CD8-positive, alpha-beta T cell (primary cell): ENCODE measurements at regions of chr1 and their contacts with region 1.

Region 1: GRCh38 chr1:88998716-88999115 is 6.3 kb upstream of the KYAT3 start:
- DNase-seq: peak in 3 of 9 experiments; percentile 38 to 84 (median 78)
- ATAC-seq: peak; percentile 89
- H3K4me3 ChIP-seq: no peak overlapping the region
- H3K4me3 Mint-ChIP-seq: no peak overlapping the region
- H3K27ac ChIP-seq: no peak overlapping the region
- H3K27ac Mint-ChIP-seq: no peak overlapping the region
- H3K4me1 ChIP-seq: peaks cover 23% of the 10 kb centered on the region
- H3K4me1 Mint-ChIP-seq: peaks cover 36% of the 10 kb centered on the region
- H3K27me3 ChIP-seq: no peaks in the 10 kb centered on the region
- H3K27me3 Mint-ChIP-seq: no peaks in the 10 kb centered on the region
- CTCF ChIP-seq: peak; percentile 60

Region 2: GRCh38 chr1:89022167-89022959 is 23.6 kb after region 1 on chr1 and contains the start of gene GBP3:
- CTCF ChIA-PET with region 1: interaction called, 7 read pairs
- POLR2A ChIA-PET with region 1: interaction called, 4 read pairs
- intact Hi-C with region 1: loop called in 1 of 2 experiments (anchors 2 kb)
- DNase-seq: peak in 3 of 9 experiments; percentile 14 to 73 (median 54)
- ATAC-seq: peak; percentile 83
- H3K4me3 ChIP-seq: peak within 1 kb of the TSS; percentile 52 to 59
- H3K4me3 Mint-ChIP-seq: peak within 1 kb of the TSS; percentile 89
- H3K27ac ChIP-seq: peak within 1 kb of the TSS; percentile 50 to 87
- H3K27ac Mint-ChIP-seq: peak within 1 kb of the TSS; percentile 94
- H3K4me1 ChIP-seq: peaks cover 23% of the 10 kb centered on the region
- H3K4me1 Mint-ChIP-seq: peaks cover 47% of the 10 kb centered on the region
- H3K27me3 ChIP-seq: no peaks in the 10 kb centered on the region
- H3K27me3 Mint-ChIP-seq: no peaks in the 10 kb centered on the region
- CTCF ChIP-seq: no peak
- total RNA-seq, gene GBP3: 18.6 to 21.6 TPM

Region 3: DNA sequence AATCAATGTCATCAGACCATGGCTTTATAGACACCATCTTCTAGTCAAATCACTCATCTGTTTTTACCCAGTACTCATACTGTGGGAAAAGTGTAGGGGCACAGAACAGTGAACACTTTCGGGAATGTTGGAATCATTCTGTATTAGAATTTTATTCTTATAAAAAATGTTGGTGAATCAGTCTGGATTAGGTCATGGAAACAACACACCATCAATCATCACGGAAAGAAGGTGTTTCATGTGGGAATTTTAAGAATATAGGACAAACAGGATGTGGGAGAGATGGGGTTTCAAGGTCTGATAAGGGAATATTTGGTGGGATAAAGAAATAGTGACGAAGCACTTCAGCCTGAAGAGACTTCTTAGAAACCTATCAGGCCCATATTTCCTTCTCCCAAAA is 49.0 kb after region 1 on chr1:
- CTCF ChIA-PET with region 1: no interaction called
- POLR2A ChIA-PET with region 1: no interaction called
- intact Hi-C with region 1: no loop called
- DNase-seq: no peak
- ATAC-seq: no peak
- H3K4me3 ChIP-seq: no peak overlapping the region
- H3K4me3 Mint-ChIP-seq: no peak overlapping the region
- H3K27ac ChIP-seq: no peak overlapping the region
- H3K27ac Mint-ChIP-seq: no peak overlapping the region
- H3K4me1 ChIP-seq: no peaks in the 10 kb centered on the region
- H3K4me1 Mint-ChIP-seq: no peaks in the 10 kb centered on the region
- H3K27me3 ChIP-seq: no peaks in the 10 kb centered on the region
- H3K27me3 Mint-ChIP-seq: no peaks in the 10 kb centered on the region
- CTCF ChIP-seq: no peak

Region 4: GRCh38 chr1:89085781-89086180 is 87.1 kb after region 1 on chr1:
- CTCF ChIA-PET with region 1: interaction called, 20 read pairs
- POLR2A ChIA-PET with region 1: no interaction called
- intact Hi-C with region 1: loop called in 1 of 2 experiments (anchors 5 kb)
- DNase-seq: peak in 4 of 9 experiments; percentile 33 to 73 (median 51)
- ATAC-seq: peak; percentile 57
- H3K4me3 ChIP-seq: no peak overlapping the region
- H3K4me3 Mint-ChIP-seq: no peak overlapping the region
- H3K27ac ChIP-seq: no peak overlapping the region
- H3K27ac Mint-ChIP-seq: no peak overlapping the region
- H3K4me1 ChIP-seq: no peaks in the 10 kb centered on the region
- H3K4me1 Mint-ChIP-seq: no peaks in the 10 kb centered on the region
- H3K27me3 ChIP-seq: no peaks in the 10 kb centered on the region
- H3K27me3 Mint-ChIP-seq: no peaks in the 10 kb centered on the region
- CTCF ChIP-seq: peak; percentile 59

Region 5: GRCh38 chr1:89190017-89190416 is 191.3 kb after region 1 on chr1:
- CTCF ChIA-PET with region 1: no interaction called
- POLR2A ChIA-PET with region 1: no interaction called
- intact Hi-C with region 1: loop called in 1 of 2 experiments (anchors 5 kb)
- DNase-seq: no peak
- ATAC-seq: no peak
- H3K4me3 ChIP-seq: no peak overlapping the region
- H3K4me3 Mint-ChIP-seq: no peak overlapping the region
- H3K27ac ChIP-seq: no peak overlapping the region
- H3K27ac Mint-ChIP-seq: no peak overlapping the region
- H3K4me1 ChIP-seq: peaks cover 5% of the 10 kb centered on the region
- H3K4me1 Mint-ChIP-seq: peaks cover 50% of the 10 kb centered on the region
- H3K27me3 ChIP-seq: no peaks in the 10 kb centered on the region
- H3K27me3 Mint-ChIP-seq: no peaks in the 10 kb centered on the region
- CTCF ChIP-seq: no peak

Region 6: DNA sequence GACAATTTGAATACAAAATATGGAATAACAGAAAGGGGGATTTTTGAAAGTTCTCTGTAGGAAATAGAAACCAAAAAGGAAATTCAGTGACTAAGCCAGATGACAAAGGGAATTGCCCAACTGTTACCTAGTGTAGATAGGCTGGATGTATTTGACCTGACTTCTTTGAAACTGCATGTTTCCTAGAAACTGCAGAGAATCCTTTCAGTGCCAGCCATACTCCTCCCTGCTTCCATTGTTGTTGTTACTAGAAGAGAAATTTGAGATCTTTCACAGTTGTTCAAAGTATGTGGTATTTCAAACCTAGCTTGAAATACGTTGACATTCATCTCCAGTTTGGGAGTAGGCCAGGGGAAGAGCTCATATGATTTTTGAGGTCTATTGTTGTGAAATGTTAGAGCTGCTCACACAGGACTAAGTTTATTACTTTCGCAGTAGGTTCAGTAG is 275.7 kb after region 1 on chr1:
- CTCF ChIA-PET with region 1: interaction called, 5 read pairs
- POLR2A ChIA-PET with region 1: no interaction called
- intact Hi-C with region 1: loop called (anchors 5 kb)
- DNase-seq: peak in 2 of 9 experiments; percentile 68 to 81
- ATAC-seq: peak; percentile 39
- H3K4me3 ChIP-seq: peak overlapping the region in 1 of 2 experiments; percentile 0
- H3K4me3 Mint-ChIP-seq: peak overlapping the region; percentile 85
- H3K27ac ChIP-seq: peak overlapping the region; percentile 24 to 70
- H3K27ac Mint-ChIP-seq: peak overlapping the region; percentile 97
- H3K4me1 ChIP-seq: peaks cover 62% of the 10 kb centered on the region
- H3K4me1 Mint-ChIP-seq: peaks cover 85% of the 10 kb centered on the region
- H3K27me3 ChIP-seq: no peaks in the 10 kb centered on the region
- H3K27me3 Mint-ChIP-seq: no peaks in the 10 kb centered on the region
- CTCF ChIP-seq: no peak

Region 7: DNA sequence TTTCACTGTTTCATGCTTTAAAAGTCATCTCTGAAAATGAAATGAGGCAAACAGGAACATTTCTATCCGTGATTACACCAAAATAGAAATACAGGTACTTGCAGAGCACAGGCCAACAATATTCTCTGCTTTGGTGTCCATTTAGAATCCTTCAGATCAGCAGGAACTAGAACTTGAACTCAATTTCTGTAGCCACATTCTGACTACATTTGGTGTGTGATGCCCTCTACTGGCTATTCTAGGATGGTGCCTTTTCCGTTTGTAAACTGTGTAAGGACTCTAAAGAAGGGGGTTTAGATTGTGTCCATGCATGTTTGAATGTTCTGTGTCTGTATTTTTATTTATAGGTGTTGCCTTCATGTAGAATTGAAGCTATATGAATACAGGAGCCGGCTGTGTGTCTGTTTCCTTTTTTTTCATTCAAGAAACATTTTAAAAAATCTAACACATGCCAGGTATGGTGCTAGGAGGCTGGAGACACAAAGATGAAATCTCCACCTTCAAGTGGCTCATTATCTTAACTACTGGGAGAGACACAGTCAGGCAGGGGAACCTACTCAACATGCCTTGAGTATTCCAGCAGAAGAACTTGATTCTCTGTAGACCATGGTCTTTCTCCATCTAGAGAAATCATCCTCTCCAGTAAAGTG is 988.6 kb after region 1 on chr1:
- CTCF ChIA-PET with region 1: no interaction called
- POLR2A ChIA-PET with region 1: no interaction called
- intact Hi-C with region 1: loop called in 1 of 2 experiments (anchors 5 kb)
- DNase-seq: peak in 8 of 9 experiments; percentile 16 to 81 (median 52)
- ATAC-seq: peak; percentile 95
- H3K4me3 ChIP-seq: no peak overlapping the region
- H3K4me3 Mint-ChIP-seq: no peak overlapping the region
- H3K27ac ChIP-seq: no peak overlapping the region
- H3K27ac Mint-ChIP-seq: no peak overlapping the region
- H3K4me1 ChIP-seq: no peaks in the 10 kb centered on the region
- H3K4me1 Mint-ChIP-seq: no peaks in the 10 kb centered on the region
- H3K27me3 ChIP-seq: no peaks in the 10 kb centered on the region
- H3K27me3 Mint-ChIP-seq: no peaks in the 10 kb centered on the region
- CTCF ChIP-seq: peak; percentile 84